Posterior cingulate gyrus (tissue), 11 donors: ENCODE measurements at regions of chr9 and their contacts with region 1.

Region 1: DNA sequence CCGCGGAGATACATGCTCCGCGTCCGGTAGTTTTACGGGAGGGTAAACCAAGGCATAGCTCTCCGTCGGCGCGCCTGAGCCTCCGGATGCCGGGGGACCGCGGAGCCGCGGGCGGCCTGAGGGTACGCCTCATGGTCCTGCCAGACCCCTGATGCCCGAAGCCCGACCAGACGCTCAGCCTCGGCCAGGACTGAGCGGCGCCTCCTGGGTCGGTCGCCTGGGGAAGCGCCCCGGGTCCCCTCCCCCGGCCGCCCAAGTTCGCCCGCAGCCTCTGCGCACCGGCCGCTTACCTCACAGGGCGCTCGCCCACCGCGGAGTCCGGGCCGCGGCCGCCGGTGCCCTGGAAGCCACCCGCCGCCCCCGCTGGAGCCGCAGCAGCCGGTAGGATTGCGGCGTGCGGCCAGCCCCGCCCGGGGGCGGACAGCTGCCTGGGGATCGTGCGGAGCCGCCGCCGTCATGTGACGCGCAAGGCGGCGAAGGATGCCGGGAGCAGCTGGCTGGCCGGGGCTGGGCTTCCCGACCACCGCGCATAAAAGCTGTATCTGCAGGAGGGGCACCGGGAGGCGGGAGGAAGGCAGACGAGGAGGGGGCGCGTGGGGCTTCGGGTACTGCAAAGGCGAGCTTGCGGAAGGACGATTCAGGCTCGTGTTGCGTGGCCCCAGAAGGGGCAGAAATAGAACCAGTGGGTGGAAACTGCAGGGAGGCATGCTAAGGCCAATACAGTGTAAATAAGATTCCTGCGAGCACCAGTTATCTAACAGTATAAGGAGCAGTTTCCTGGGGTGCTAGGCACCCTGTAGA is at the start of gene FBXO10:
- DNase-seq: peak; percentile 61 to 96 (median 76)

Region 2: DNA sequence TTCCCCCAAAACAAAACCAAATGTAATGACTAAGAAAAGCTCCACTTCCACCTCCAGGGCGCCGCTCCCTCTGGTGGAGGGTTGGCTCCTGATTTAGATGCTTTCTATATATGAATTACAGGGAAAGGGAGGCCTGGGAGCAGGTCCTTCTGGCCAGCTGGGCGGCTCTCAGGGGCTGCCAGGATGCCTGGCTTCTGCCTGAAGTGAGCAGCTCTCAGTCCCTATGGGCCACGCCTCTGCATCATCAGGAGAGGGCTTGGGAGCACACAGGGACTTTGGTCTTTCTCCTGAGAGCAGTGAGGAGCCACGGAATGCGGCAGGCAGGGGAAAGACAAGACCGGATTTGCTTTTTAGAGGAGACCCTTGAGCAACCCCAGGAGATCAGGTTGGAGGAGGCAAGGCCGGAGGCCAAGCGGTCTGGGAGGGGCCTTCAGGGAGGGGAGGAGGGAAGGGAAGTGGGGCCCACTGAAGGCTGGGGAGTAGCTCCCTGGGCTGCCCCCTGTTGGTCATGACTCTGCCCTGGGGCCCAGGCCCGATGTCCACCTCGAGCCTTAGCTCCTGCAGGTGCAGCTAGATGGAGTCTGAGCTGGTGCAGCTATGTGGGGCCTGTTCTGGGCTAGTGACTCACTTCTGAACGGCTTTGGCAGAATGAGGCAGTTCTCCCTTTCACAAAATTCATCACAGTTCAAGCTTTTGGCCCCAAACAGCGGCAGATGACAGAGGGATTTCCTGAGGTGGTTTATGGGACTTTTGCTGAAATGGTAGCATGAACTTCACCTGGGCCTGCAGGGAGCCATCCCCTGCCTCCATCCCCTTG is 164.9 kb before region 1 on chr9:
- intact Hi-C with region 1: no loop called
- DNase-seq: peak in 2 of 10 donors; percentile 73 to 88

Region 3: GRCh38 chr9:37485389-37486219 is 90.5 kb before region 1 on chr9 and contains the start of gene POLR1E:
- intact Hi-C with region 1: loop called (anchors 10 kb)
- DNase-seq: peak; percentile 85 to 99 (median 94)

Region 4: DNA sequence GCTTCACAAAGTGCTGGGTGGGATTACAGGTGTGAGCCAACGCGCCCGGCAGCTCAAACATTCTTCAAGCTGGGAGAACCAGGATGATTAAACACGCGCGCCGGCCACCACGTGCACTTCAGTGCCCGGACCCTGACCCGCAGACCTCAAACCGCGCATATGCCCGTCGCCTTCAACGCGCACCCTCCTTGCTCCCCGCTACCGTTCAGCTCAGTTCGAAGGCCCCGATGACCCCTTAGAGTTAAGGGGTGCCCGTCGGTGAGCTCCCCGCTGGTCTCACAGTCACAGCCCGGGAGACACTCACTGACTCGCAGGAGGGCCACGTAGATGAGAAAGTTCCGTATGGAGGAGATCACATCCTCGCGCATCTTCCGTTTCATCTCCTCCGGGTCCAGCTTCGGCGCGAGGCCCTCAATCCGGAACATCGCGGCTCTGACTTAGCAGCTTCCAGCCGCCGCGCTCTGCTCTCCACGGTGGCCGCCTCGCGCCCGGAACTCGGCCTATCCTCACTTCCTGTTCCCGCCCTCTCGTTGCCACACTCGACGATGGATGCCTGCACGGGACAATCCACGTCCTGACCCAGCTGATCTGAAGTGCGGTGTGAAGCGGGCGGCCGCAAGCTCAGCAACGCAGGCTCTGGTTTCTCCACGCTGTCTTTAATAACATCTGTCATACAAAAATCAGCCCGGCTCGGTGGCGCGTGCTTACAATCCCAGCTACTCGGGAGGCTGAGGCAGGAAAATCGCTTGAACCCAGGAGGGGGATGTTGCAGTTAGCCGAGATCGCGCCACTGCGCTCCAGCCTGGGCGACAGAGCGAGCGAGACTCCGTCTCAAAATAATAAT is 16.2 kb after region 1 on chr9 and contains the start of gene TOMM5:
- intact Hi-C with region 1: loop called (anchors 2 kb)
- DNase-seq: peak; percentile 91 to 99 (median 94)

Region 5: GRCh38 chr9:37683531-37684371 is 107.6 kb after region 1 on chr9:
- intact Hi-C with region 1: no loop called
- DNase-seq: no peak